Right ventricle myocardium inferior (tissue), 1 donor: ENCODE measurements at regions of chr13 and their contacts with region 1.

Region 1: DNA sequence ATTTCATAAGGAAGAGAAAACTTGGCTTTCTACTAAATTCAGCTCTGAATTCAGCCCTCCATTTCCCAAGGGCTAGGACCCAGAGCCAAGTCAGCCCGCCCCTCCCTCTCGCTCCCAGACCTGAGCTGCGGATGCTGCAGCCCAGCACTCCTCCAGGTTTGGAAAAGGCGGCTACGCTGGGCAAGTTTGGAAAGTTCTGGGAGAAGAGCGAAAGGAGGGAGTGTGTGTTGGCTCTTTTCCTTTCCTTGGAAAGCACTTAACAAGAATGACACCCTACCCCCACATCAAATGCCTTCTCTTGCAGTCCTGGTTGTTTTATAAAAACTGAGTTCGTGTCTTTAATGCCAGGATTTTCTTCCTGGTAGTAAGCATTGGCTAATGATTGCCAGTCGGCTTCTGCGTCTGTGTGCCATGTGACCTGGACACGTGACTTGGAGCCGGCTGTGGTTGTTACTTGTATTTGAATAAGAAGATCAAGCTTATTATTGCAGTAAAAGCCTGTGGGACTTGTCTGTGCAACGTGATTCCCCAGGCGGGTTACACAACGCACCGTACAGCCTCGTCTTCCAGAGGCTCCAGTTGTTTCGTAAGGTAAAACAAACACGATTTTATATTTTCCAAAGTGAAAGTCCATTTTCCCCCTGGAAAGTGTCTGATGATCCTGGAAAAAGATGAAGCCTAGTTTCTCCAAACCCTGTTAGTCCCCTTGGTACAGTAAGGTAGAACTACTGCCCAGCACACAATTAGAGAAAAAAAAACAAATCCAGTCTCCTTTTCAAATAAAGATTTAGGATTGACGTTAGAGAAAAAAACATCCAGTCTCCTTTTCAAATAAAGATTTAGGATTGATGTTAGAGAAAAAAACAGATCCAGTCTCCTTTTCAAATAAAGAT is 26.9 kb upstream of the UBE2L5 start:
- DNase-seq: peak; percentile 94
- ATAC-seq: peak; percentile 84

Region 2: DNA sequence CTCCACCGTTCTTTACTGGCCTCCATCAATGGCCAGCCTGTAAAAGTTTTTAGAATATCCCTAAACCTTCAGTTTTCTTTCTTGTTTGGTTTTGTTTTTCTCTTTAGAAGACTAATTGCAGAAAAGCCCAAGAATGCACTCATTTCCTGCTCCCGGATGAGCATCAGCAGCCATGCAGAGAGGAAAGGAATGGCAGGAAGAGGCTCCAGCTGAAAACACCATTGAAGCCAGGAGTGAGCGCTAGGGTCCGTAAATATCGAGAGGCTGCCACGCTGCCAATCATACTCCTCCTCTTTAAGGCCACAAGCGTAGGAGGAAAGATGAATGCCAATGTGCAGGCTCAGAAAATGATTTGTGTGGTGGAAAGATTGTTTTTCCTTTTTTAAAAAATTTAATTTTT is 30.6 kb before region 1 on chr13:
- intact Hi-C with region 1: loop called (anchors 5 kb)
- DNase-seq: no peak
- ATAC-seq: no peak

Region 3: DNA sequence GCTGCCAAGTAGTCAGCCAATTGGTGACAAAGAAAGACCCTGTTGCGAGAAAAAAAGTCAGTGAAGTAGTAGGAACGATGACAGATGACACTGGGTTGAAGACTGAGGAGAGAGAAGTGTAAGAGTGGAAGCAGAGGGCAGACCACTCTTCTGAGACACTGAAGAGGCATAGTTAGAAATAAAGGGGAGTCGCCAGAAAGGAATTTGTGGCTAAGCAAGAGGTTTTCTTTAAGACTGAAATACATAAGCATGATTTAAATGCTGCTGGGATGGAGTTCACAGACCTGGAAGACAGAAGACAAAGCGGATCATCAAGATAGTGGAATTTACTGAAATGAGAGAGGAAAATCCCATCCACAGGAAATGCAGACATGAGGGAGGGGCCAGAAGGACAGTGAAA is 166.1 kb after region 1 on chr13:
- intact Hi-C with region 1: no loop called
- DNase-seq: no peak
- ATAC-seq: no peak